ENCODE measurements at regions of chr15 and their contacts with region 1.

Region 1: GRCh38 chr15:59570368-59570767 is 41.2 kb upstream of the GCNT3 start:
- DNase-seq: peak in 1 of 2 experiments; percentile 7
- H3K4me3 ChIP-seq: no peak overlapping the region
- H3K4me3 Mint-ChIP-seq: no peak overlapping the region
- H3K27ac Mint-ChIP-seq: peak overlapping the region; percentile 9
- H3K4me1 ChIP-seq: peaks cover 5% of the 10 kb centered on the region
- H3K4me1 Mint-ChIP-seq: peaks cover 14% of the 10 kb centered on the region
- H3K27me3 ChIP-seq: no peaks in the 10 kb centered on the region
- H3K27me3 Mint-ChIP-seq: no peaks in the 10 kb centered on the region
- CTCF ChIP-seq: no peak

Region 2: DNA sequence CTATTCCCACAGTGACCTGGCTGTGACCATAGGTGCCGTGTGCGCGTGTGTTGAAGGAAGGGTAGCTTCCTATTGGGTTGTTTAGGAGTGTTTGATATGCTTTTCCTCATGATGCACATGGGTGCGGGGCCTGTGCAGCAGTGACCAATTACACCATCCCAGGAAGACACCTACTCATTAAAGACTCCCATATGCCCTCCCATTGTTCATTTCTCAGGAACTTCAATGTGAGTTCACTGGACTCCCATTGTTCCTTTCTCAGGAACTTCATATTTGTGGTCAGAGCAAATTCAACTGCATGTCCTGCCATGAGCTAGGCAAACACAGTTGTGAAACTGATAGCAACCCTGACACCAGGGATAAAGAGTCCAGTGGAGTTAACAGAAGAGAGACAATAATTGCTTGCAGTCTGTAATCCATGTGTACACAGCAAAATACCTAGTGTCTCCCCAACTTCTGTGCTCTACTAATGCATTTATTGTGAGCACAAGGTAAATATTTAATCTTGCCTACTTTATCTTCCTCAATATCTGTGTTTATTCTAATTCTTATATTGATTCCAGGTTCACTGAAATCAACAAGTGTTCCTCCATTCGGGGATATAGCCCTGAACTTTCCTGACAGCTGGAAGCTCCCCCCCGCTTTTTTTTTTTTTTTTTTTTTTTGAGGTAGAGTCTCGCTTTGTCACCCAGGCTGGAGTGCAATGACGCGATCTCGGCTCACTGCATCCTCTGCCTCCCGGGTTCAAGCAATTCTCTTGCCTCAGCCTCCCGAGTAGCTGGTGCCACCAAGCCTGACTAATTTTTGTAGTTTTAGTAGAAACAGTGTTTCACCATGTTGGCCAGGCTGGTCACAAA is 16.3 kb before region 1 on chr15:
- CTCF ChIA-PET with region 1: no interaction called
- POLR2A ChIA-PET with region 1: interaction called, 3 read pairs
- intact Hi-C with region 1: loop called (anchors 1 kb)
- DNase-seq: peak; percentile 79 to 86
- H3K4me3 ChIP-seq: no peak overlapping the region
- H3K4me3 Mint-ChIP-seq: no peak overlapping the region
- H3K27ac Mint-ChIP-seq: no peak overlapping the region
- H3K4me1 ChIP-seq: peaks cover 29% of the 10 kb centered on the region
- H3K4me1 Mint-ChIP-seq: peaks cover 30% of the 10 kb centered on the region
- H3K27me3 ChIP-seq: no peaks in the 10 kb centered on the region; the same call in 1 of the 2 replicates
- H3K27me3 Mint-ChIP-seq: peaks cover 4% of the 10 kb centered on the region
- CTCF ChIP-seq: no peak

Measured in Caco-2 (cell line).